Breast epithelium (tissue), 4 donors: ENCODE measurements at regions of chr15 and their contacts with region 1.

Region 1: DNA sequence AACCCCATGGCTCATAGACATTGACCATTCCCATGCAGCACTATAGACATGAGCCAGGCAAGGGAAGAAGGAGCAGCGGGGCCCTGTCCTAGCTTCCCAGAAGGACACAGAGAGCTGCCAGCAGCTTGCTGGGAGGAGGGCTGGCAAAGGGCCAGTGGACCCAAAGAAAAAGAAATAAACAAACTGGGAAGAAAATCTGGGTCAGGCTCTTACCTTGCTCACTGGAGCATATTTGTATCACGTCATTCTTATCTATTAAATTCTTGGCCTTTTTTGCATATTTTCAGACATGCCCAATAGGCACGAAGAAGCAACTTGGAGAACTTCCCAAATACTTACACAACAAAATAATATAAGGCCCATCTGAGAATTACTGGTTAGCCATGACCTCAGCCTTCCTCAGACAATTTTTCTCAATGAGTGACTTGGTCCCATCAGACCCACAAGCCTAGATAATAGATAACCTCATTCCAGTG is 28.4 kb downstream of the RASGRP1 start:
- DNase-seq: no peak
- H3K4me3 ChIP-seq: no peak overlapping the region
- H3K27ac ChIP-seq: no peak overlapping the region
- H3K4me1 ChIP-seq: no peaks in the 10 kb centered on the region
- H3K27me3 ChIP-seq: no peaks in the 10 kb centered on the region
- CTCF ChIP-seq: no peak
- POLR2A ChIP-seq: no peak

Region 2: GRCh38 chr15:36844534-36844998 is 1691.7 kb before region 1 on chr15:
- intact Hi-C with region 1: no loop called
- DNase-seq: no peak
- H3K4me3 ChIP-seq: no peak overlapping the region
- H3K27ac ChIP-seq: no peak overlapping the region
- H3K4me1 ChIP-seq: no peaks in the 10 kb centered on the region
- H3K27me3 ChIP-seq: no peaks in the 10 kb centered on the region
- CTCF ChIP-seq: no peak
- POLR2A ChIP-seq: no peak

Region 3: DNA sequence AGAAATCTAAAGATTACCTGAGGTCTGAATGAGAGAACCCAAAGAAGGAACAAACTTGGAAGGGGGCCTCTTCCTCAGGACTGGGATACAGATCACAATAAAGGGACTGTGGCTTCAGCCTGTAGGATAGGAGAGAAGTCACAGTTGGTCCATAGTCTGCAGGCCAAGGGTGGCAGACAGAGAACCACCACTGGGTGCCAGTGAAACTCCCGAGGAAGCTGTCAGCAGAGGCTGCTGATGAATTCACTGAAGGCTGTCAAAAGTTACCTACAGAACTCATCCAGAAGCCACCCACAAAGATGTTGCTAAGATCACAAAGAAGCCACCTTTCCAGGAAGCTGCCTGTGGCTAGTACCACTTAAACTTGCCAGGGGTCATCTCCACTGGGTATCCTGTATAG is 523.3 kb before region 1 on chr15:
- intact Hi-C with region 1: loop called (anchors 10 kb)
- DNase-seq: no peak
- H3K4me3 ChIP-seq: no peak overlapping the region
- H3K27ac ChIP-seq: no peak overlapping the region
- H3K4me1 ChIP-seq: no peaks in the 10 kb centered on the region
- H3K27me3 ChIP-seq: no peaks in the 10 kb centered on the region
- CTCF ChIP-seq: no peak
- POLR2A ChIP-seq: no peak